Activated CD8-positive, alpha-beta memory T cell treated with anti-CD3 and anti-CD28 coated beads, Interleukin-2, amount 10 ng/mL, durations not matched to agents 7 days and 5 days (primary cell): ENCODE measurements at regions of chr2 and their contacts with region 1.

Region 1: GRCh38 chr2:75076088-75076487 is 117.6 kb downstream of the POLE4 start:
- DNase-seq: no peak
- ATAC-seq: no peak
- H3K4me3 Mint-ChIP-seq: no peak overlapping the region
- H3K27ac Mint-ChIP-seq: no peak overlapping the region
- H3K4me1 Mint-ChIP-seq: no peaks in the 10 kb centered on the region
- H3K27me3 Mint-ChIP-seq: peaks cover 3% of the 10 kb centered on the region

Region 2: DNA sequence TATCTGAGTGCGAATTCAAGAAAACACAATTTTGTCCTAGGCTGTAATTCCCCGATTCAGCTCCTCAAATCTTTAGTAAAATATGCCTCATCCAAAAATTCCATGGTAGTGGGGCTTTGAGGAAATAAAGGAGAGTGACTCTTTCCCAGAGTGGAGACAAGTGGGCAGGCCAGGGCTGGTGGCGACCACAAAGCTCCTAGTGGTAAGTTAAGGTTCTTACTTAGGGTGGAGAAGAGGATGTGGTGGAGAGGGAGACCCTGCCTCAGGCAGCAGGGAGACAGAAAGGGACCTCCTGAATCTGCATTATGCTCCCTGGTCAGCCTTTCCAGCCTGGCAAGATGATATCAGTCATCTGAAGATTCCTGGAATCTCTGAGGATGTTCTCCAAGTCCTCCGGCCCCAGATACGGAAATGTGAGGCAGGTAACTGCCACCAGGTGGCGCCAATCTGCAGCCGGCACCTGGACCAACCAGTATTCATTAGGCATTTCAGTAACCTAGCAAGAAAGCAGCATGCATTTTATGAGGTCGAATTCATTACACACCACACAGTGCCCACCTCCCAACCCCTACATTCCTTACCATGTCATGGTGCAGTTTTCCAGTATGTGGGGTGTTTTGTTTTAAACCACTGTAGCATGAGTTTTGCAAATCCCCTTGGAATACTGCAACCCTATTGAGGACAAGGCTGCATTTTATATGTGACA is 11.2 kb before region 1 on chr2:
- CTCF ChIA-PET with region 1: interaction called, 24 read pairs
- DNase-seq: peak; percentile 59
- ATAC-seq: no peak
- H3K4me3 Mint-ChIP-seq: no peak overlapping the region
- H3K27ac Mint-ChIP-seq: no peak overlapping the region
- H3K4me1 Mint-ChIP-seq: peaks cover 23% of the 10 kb centered on the region
- H3K27me3 Mint-ChIP-seq: peaks cover 8% of the 10 kb centered on the region

Region 3: DNA sequence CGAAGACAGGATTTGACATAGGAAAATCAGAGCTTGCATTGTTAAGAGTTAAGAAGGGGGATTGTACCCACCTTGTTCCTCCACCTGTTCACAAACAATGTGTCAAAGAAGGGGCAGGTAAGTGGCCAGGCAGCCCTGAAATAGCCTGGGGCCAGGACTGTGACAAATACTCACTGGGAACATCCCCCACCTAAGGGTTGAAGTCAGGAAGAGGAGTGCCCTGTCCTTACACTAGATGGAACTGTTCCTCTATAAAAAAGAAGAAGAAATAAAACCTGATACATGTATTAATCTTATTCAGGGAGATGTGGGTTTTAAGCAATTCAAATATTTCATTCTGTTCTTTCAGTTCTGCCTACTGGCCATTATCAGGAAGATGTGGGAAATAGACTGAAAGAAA is 81.3 kb after region 1 on chr2:
- CTCF ChIA-PET with region 1: no interaction called
- DNase-seq: no peak
- ATAC-seq: no peak
- H3K4me3 Mint-ChIP-seq: no peak overlapping the region
- H3K27ac Mint-ChIP-seq: no peak overlapping the region
- H3K4me1 Mint-ChIP-seq: no peaks in the 10 kb centered on the region
- H3K27me3 Mint-ChIP-seq: peaks cover 20% of the 10 kb centered on the region